Activated T-helper 2 cell treated with anti-CD3 and anti-CD28 coated beads, Interferon-gamma antibody, Interleukin-2, Interleukin-4, amounts not matched to agents 10 μg/mL and 5 μg/mL and 100 μg/mL, durations not matched to agents 14 hours and 24 hours and 36 hours (primary cell): ENCODE measurements at regions of chr6 and their contacts with region 1.

Region 1: DNA sequence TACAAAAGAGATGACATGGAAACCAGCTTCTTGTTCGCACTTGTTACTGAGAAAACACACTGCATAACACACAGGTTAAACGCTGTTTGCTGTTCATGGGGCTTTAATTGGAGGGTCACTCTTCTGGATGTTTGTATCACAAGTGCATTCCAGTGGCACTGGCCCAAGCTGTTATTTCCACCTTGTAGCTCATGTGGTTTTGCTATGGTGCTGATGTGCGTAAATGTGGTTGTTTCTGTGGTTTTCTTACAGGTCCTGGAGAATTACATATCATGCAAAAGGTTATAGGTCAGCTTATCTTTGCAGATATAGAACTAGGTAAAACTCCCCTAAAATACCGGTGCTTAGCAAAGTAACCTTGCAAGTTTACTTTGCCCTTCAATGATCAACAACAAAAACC is 89.3 kb upstream of the AHI1 start:
- DNase-seq: peak; percentile 55
- H3K4me3 Mint-ChIP-seq: no peak overlapping the region
- H3K27ac Mint-ChIP-seq: peak overlapping the region; percentile 95
- H3K4me1 Mint-ChIP-seq: peaks cover 75% of the 10 kb centered on the region
- H3K27me3 Mint-ChIP-seq: no peaks in the 10 kb centered on the region

Region 2: GRCh38 chr6:135568366-135568765 is 18.5 kb before region 1 on chr6:
- intact Hi-C with region 1: loop called (anchors 1 kb)
- DNase-seq: peak; percentile 66
- H3K4me3 Mint-ChIP-seq: no peak overlapping the region
- H3K27ac Mint-ChIP-seq: peak overlapping the region; percentile 94
- H3K4me1 Mint-ChIP-seq: peaks cover 71% of the 10 kb centered on the region
- H3K27me3 Mint-ChIP-seq: no peaks in the 10 kb centered on the region

Region 3: GRCh38 chr6:135640449-135641111 is 53.7 kb after region 1 on chr6:
- intact Hi-C with region 1: loop called (anchors 2 kb)
- DNase-seq: no peak
- H3K4me3 Mint-ChIP-seq: peak overlapping the region; percentile 64
- H3K27ac Mint-ChIP-seq: peak overlapping the region; percentile 94
- H3K4me1 Mint-ChIP-seq: peaks cover 63% of the 10 kb centered on the region
- H3K27me3 Mint-ChIP-seq: no peaks in the 10 kb centered on the region

Region 4: DNA sequence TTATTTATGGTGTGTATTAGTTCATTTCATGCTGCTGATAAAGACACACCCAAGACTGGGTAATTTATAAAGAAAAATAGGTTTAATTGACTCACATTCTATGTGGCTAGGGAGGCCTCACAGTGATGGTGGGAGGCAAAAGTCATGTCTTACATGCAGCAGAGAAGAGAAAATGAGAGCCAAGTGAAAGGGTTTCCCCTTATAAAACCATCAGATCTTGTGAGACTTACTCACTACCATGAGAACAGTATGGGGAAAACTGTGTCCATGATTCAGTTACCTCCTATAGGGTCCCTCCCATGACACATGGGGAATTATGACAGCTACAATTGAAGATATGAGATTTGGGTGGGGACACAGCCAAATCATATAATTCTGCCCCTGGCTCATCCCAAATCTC is 60.7 kb after region 1 on chr6:
- intact Hi-C with region 1: loop called (anchors 2 kb)
- DNase-seq: no peak
- H3K4me3 Mint-ChIP-seq: peak overlapping the region; percentile 92
- H3K27ac Mint-ChIP-seq: peak overlapping the region; percentile 97
- H3K4me1 Mint-ChIP-seq: peaks cover 58% of the 10 kb centered on the region
- H3K27me3 Mint-ChIP-seq: no peaks in the 10 kb centered on the region

Region 5: GRCh38 chr6:135935941-135936601 is 349.2 kb after region 1 on chr6:
- intact Hi-C with region 1: no loop called
- DNase-seq: no peak
- H3K4me3 Mint-ChIP-seq: no peak overlapping the region
- H3K27ac Mint-ChIP-seq: no peak overlapping the region
- H3K4me1 Mint-ChIP-seq: peaks cover 27% of the 10 kb centered on the region
- H3K27me3 Mint-ChIP-seq: no peaks in the 10 kb centered on the region

Region 6: GRCh38 chr6:135994857-135995544 is 408.2 kb after region 1 on chr6:
- intact Hi-C with region 1: no loop called
- DNase-seq: no peak
- H3K4me3 Mint-ChIP-seq: no peak overlapping the region
- H3K27ac Mint-ChIP-seq: peak overlapping the region; percentile 57
- H3K4me1 Mint-ChIP-seq: peaks cover 12% of the 10 kb centered on the region
- H3K27me3 Mint-ChIP-seq: no peaks in the 10 kb centered on the region